ENCODE measurements at regions of chr1 and their contacts with region 1.

Region 1: GRCh38 chr1:100902365-100902764 is 6.5 kb downstream of the SLC30A7 start:
- DNase-seq: no peak
- ATAC-seq: no peak
- H3K4me3 ChIP-seq: no peak overlapping the region
- H3K4me3 Mint-ChIP-seq: no peak overlapping the region
- H3K27ac ChIP-seq: no peak overlapping the region
- H3K27ac Mint-ChIP-seq: no peak overlapping the region
- H3K4me1 ChIP-seq: peaks cover 3% of the 10 kb centered on the region
- H3K4me1 Mint-ChIP-seq: peaks cover 87% of the 10 kb centered on the region
- H3K27me3 ChIP-seq: no peaks in the 10 kb centered on the region
- H3K27me3 Mint-ChIP-seq: no peaks in the 10 kb centered on the region
- CTCF ChIP-seq: no peak

Region 2: DNA sequence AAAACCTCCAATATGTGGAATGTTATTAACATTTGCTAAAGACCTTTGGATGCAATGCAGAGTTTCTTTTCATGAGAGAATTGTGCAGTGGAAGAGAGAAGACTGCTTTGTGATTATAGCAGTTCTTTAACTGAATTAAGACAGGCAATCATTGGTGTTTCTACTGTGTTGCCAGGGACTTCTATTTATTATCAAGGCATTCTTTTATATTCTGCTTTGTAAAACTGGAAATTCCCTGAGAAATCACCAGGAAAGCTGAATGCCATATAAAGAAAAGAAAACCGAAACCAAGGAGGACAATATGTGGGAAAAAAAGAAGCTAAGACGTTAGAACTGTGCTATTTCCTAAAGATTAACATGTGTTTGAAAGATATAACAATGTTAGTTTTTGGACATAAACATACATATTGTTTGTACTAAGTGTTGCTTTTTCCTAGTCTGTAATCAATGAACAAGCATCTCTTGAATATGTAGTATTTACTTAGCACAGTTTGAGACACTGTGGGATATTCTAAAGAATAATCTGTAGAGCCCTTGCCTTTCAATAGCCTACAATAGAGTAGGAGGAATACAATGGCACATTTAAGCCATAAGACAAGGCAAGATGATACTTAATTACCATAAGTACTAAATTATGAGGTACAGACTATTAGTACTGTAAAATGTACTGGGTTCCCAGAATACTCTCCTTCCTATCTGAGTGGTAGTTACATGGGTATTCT is 54.8 kb before region 1 on chr1:
- CTCF ChIA-PET with region 1: no interaction called
- POLR2A ChIA-PET with region 1: no interaction called
- intact Hi-C with region 1: no loop called
- DNase-seq: no peak
- ATAC-seq: no peak
- H3K4me3 ChIP-seq: no peak overlapping the region
- H3K4me3 Mint-ChIP-seq: no peak overlapping the region
- H3K27ac ChIP-seq: no peak overlapping the region
- H3K27ac Mint-ChIP-seq: no peak overlapping the region
- H3K4me1 ChIP-seq: no peaks in the 10 kb centered on the region
- H3K4me1 Mint-ChIP-seq: no peaks in the 10 kb centered on the region
- H3K27me3 ChIP-seq: peaks cover 7 to 10% of the 10 kb centered on the region in 2 experiments
- H3K27me3 Mint-ChIP-seq: peaks cover 39% of the 10 kb centered on the region
- CTCF ChIP-seq: no peak

Region 3: GRCh38 chr1:100866041-100866900 is 36.1 kb before region 1 on chr1:
- CTCF ChIA-PET with region 1: no interaction called
- POLR2A ChIA-PET with region 1: no interaction called
- intact Hi-C with region 1: no loop called
- DNase-seq: peak in 3 of 14 experiments; percentile 33 to 48 (median 41)
- ATAC-seq: no peak
- H3K4me3 ChIP-seq: no peak overlapping the region
- H3K4me3 Mint-ChIP-seq: no peak overlapping the region
- H3K27ac ChIP-seq: no peak overlapping the region
- H3K27ac Mint-ChIP-seq: no peak overlapping the region
- H3K4me1 ChIP-seq: no peaks in the 10 kb centered on the region
- H3K4me1 Mint-ChIP-seq: no peaks in the 10 kb centered on the region
- H3K27me3 ChIP-seq: no peaks in the 10 kb centered on the region
- H3K27me3 Mint-ChIP-seq: no peaks in the 10 kb centered on the region
- CTCF ChIP-seq: peak; percentile 60

Region 4: GRCh38 chr1:101364370-101365120 is 462.2 kb after region 1 on chr1:
- CTCF ChIA-PET with region 1: no interaction called
- POLR2A ChIA-PET with region 1: no interaction called
- intact Hi-C with region 1: loop called (anchors 5 kb)
- DNase-seq: no peak
- ATAC-seq: no peak
- H3K4me3 ChIP-seq: no peak overlapping the region
- H3K4me3 Mint-ChIP-seq: no peak overlapping the region
- H3K27ac ChIP-seq: no peak overlapping the region
- H3K27ac Mint-ChIP-seq: no peak overlapping the region
- H3K4me1 ChIP-seq: no peaks in the 10 kb centered on the region
- H3K4me1 Mint-ChIP-seq: no peaks in the 10 kb centered on the region
- H3K27me3 ChIP-seq: no peaks in the 10 kb centered on the region
- H3K27me3 Mint-ChIP-seq: no peaks in the 10 kb centered on the region
- CTCF ChIP-seq: no peak